Sciatic nerve (tissue), 2 donors: ENCODE measurements at regions of chr14 and their contacts with region 1.

Region 1: GRCh38 chr14:42248151-42248550 is 641.5 kb downstream of the LRFN5 start:
- DNase-seq: no peak
- ATAC-seq: no peak

Region 2: GRCh38 chr14:43282457-43282856 is 1034.3 kb after region 1 on chr14:
- intact Hi-C with region 1: loop called (anchors 5 kb)
- DNase-seq: no peak
- ATAC-seq: no peak